Cardiac septum (tissue), 1 donor: ENCODE measurements at regions of chrX and their contacts with region 1.

Region 1: DNA sequence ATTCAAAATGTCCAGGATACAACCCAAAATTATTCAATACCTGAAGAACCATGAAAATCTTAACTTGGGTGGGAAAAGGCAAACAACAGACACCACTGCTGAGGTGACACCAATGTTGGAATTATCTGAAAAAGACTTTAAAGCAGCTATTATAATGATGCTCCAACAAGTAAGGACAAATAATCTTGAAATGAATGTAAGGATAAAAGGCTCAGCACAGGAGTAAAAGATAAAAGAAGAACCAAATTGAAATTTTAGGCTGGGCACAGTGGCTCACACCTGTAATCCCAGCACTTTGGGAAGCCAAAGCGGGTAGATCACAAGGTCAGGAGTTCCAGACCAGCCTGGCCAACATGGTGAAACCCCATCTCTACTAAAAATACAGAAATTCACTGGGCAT is 4.0 kb upstream of the SLC9A7 start:
- DNase-seq: no peak

Region 2: GRCh38 chrX:46796574-46797191 is 33.7 kb after region 1 on chrX:
- intact Hi-C with region 1: loop called (anchors 5 kb)
- DNase-seq: no peak